GM23248 (cell line): ENCODE measurements at regions of chr7 and their contacts with region 1.

Region 1: GRCh38 chr7:121994625-121995410 is 121.9 kb downstream of the PTPRZ1 start:
- DNase-seq: peak; percentile 78
- H3K4me3 ChIP-seq: no peak overlapping the region
- H3K27ac ChIP-seq: no peak overlapping the region
- H3K4me1 ChIP-seq: no peaks in the 10 kb centered on the region
- H3K27me3 ChIP-seq: no peaks in the 10 kb centered on the region

Region 2: GRCh38 chr7:121366852-121367431 is 627.9 kb before region 1 on chr7:
- in situ Hi-C with region 1: loop called (anchors 10 kb)
- DNase-seq: peak; percentile 51
- H3K4me3 ChIP-seq: no peak overlapping the region
- H3K27ac ChIP-seq: no peak overlapping the region
- H3K4me1 ChIP-seq: peaks cover 2% of the 10 kb centered on the region; the same call in 1 of the 2 replicates
- H3K27me3 ChIP-seq: no peaks in the 10 kb centered on the region

Region 3: DNA sequence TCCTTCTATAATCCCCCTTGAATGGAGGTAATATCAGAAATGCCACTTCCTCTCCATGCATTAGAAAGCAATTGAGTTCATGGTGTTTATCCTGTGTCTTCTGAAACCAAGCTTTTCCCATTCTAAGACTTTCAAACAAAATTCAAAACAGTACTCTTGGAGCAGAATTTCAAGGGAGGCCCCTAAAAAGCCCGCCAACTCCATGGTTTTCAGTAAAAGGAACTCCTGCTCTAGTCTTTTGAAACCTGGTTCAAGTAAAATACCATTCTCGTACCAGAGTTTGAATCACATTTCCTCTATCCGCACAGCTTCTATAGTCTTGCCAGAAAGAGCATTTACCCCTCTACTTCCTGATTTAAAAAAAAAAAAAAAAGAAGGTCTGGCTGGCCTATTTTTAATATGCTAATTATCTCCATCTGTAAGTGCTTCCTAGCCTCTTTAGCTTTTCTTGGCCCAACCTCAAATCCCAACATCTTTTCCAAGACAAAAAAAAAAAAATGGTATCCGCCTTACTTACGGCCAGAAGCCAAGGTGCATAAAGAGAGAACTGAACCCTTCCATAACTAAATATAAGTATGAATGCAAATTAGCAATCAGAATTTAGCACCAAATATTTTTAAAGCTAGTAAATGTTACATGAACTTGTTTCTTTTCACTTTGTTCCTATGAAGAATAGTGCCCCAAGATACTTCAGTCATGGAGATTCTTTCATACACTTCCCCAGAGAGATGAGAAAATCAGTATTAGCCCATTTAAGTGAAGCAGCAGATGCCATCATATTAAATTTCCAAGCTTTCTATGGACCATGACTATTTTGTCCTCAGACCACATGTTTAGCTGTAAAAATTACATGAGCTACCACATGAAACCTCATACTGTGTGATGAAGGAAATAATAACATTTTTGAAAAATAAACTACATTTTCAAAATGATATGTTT is 398.8 kb before region 1 on chr7:
- in situ Hi-C with region 1: loop called (anchors 25 kb)
- DNase-seq: no peak
- H3K4me3 ChIP-seq: no peak overlapping the region
- H3K27ac ChIP-seq: no peak overlapping the region
- H3K4me1 ChIP-seq: no peaks in the 10 kb centered on the region
- H3K27me3 ChIP-seq: no peaks in the 10 kb centered on the region

Region 4: GRCh38 chr7:121752706-121753105 is 242.1 kb before region 1 on chr7:
- in situ Hi-C with region 1: loop called (anchors 10 kb)
- DNase-seq: peak; percentile 46
- H3K4me3 ChIP-seq: no peak overlapping the region
- H3K27ac ChIP-seq: no peak overlapping the region
- H3K4me1 ChIP-seq: no peaks in the 10 kb centered on the region
- H3K27me3 ChIP-seq: peaks cover 5% of the 10 kb centered on the region; the same call in 1 of the 2 replicates

Region 5: GRCh38 chr7:121901026-121901425 is 93.8 kb before region 1 on chr7:
- in situ Hi-C with region 1: no loop called
- DNase-seq: no peak
- H3K4me3 ChIP-seq: no peak overlapping the region
- H3K27ac ChIP-seq: no peak overlapping the region
- H3K4me1 ChIP-seq: no peaks in the 10 kb centered on the region
- H3K27me3 ChIP-seq: peaks cover 12% of the 10 kb centered on the region

Region 6: DNA sequence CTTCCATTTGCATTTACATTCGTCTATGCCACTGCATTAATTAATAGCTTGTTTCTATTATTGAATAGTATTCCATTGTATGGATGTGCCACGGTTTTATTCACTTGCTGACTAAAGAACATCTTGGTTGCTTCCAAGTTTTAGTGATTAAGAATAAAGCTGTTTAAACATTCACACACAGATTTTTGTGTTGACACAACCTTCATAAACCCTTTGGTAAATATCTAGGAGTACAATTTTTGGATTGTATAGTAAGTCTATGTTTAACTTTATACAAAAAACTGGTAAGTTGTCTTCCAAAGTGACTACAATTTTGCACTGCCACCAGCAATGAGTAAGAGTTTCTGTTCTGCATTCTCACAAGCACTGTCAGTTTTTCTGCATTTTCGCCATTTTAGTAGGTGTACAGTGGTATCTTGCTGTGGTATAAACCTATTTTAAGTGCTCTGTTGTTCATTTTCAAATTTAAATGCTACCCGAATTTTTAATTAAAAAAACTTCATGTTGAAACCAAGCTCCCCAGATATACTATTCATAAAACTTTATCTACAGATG is 582.7 kb after region 1 on chr7:
- in situ Hi-C with region 1: no loop called
- DNase-seq: no peak
- H3K4me3 ChIP-seq: no peak overlapping the region
- H3K27ac ChIP-seq: no peak overlapping the region
- H3K4me1 ChIP-seq: no peaks in the 10 kb centered on the region
- H3K27me3 ChIP-seq: no peaks in the 10 kb centered on the region